Esophagus muscularis mucosa (tissue), 4 donors: ENCODE measurements at regions of chr17 and their contacts with region 1.

Region 1: GRCh38 chr17:65455972-65456343 is 105.5 kb downstream of the AXIN2 start:
- DNase-seq: no peak
- H3K4me3 ChIP-seq: no peak overlapping the region
- H3K27ac ChIP-seq: peak overlapping the region; percentile 26 to 45 (median 40)
- H3K4me1 ChIP-seq: peaks cover 22 to 35% (median 28%) of the 10 kb centered on the region in 4 donors
- H3K27me3 ChIP-seq: no peaks in the 10 kb centered on the region
- CTCF ChIP-seq: peak; percentile 42 to 53 (median 43)
- EP300 ChIP-seq: no peak
- POLR2A ChIP-seq: no peak

Region 2: DNA sequence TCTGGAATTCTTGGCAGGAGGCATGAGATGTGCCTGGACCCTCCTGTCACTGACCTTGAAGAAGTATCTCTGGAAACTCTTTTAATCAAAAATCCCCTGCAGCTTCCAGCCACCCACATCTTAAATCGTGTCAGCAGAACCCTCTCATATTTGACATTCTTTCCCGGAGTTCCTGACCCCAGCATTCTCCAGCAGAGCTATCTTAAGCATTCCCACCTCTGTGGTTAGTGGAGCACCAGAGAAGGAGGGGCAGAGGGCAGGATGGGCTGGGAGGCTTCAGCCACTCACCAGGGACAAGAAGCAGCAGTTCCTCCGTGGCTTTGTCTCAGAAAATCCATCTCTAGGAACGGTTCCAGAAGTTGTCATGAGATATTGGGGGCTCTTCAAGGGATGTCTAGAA is 168.9 kb before region 1 on chr17:
- intact Hi-C with region 1: loop called (anchors 10 kb)
- DNase-seq: no peak
- H3K4me3 ChIP-seq: no peak overlapping the region
- H3K27ac ChIP-seq: no peak overlapping the region
- H3K4me1 ChIP-seq: peaks cover 0 to 10% (median 4%) of the 10 kb centered on the region in 4 donors
- H3K27me3 ChIP-seq: no peaks in the 10 kb centered on the region
- CTCF ChIP-seq: no peak
- EP300 ChIP-seq: no peak
- POLR2A ChIP-seq: no peak

Region 3: GRCh38 chr17:65678546-65678945 is 222.6 kb after region 1 on chr17:
- intact Hi-C with region 1: no loop called
- DNase-seq: no peak
- H3K4me3 ChIP-seq: no peak overlapping the region
- H3K27ac ChIP-seq: no peak overlapping the region
- H3K4me1 ChIP-seq: peaks cover 0 to 10% (median 3%) of the 10 kb centered on the region in 4 donors
- H3K27me3 ChIP-seq: no peaks in the 10 kb centered on the region
- CTCF ChIP-seq: no peak
- EP300 ChIP-seq: no peak
- POLR2A ChIP-seq: no peak

Region 4: GRCh38 chr17:65718601-65719000 is 262.6 kb after region 1 on chr17:
- intact Hi-C with region 1: loop called (anchors 5 kb)
- DNase-seq: no peak
- H3K4me3 ChIP-seq: no peak overlapping the region
- H3K27ac ChIP-seq: no peak overlapping the region
- H3K4me1 ChIP-seq: peaks cover 0 to 9% (median 8%) of the 10 kb centered on the region in 4 donors
- H3K27me3 ChIP-seq: no peaks in the 10 kb centered on the region
- CTCF ChIP-seq: no peak
- EP300 ChIP-seq: no peak
- POLR2A ChIP-seq: no peak